K562 (cell line): ENCODE measurements at regions of chr17 and their contacts with region 1.

Region 1: DNA sequence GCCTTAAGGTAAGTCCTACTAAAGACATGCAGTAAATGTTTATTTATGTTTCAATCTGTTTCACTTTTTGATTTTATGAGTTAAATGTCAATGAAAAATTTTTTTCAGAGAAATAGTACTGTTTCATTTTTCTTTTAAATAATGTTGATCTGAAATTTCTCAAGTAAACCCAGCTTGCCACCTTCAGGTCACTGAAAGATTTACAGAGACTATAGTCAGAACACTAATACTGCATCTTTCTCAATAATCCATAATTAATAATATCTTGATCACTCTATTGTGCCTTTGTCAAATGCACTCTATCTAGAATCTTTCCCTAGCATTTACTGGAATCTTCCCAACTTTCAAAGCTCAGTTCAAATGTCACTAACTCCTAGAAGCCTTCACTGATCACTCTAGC is 6.4 kb upstream of the DHX40 start:
- DNase-seq: no peak
- ATAC-seq: no peak
- H3K4me3 ChIP-seq: no peak overlapping the region
- H3K27ac ChIP-seq: no peak overlapping the region
- H3K4me1 ChIP-seq: peaks cover 3 to 7% of the 10 kb centered on the region in 2 experiments; a peak in 3 of 5 replicates
- H3K27me3 ChIP-seq: peaks cover 5% of the 10 kb centered on the region in 2 experiments; a peak in 3 of 5 replicates
- CTCF ChIP-seq: peak in 2 of 3 experiments; percentile 34 to 53; a peak in 3 of 6 replicates
- EP300 ChIP-seq: no peak
- POLR2A ChIP-seq: no peak
- RAD21 ChIP-seq: peak; percentile 52 to 59

Region 2: GRCh38 chr17:59451706-59452105 is 107.3 kb before region 1 on chr17:
- CTCF ChIA-PET with region 1: no interaction called
- POLR2A ChIA-PET with region 1: no interaction called
- in situ Hi-C with region 1: no loop called
- intact Hi-C with region 1: loop called (anchors 10 kb)
- DNase-seq: no peak
- ATAC-seq: no peak
- H3K4me3 ChIP-seq: no peak overlapping the region
- H3K27ac ChIP-seq: no peak overlapping the region
- H3K4me1 ChIP-seq: peaks cover 0 to 3% of the 10 kb centered on the region in 2 experiments; a peak in 3 of 5 replicates
- H3K27me3 ChIP-seq: 0 out of 5 replicates have a peak, but pooled peaks cover 0 to 5% of the 10 kb centered on the region in 2 experiments
- CTCF ChIP-seq: no peak
- EP300 ChIP-seq: no peak
- POLR2A ChIP-seq: no peak
- RAD21 ChIP-seq: no peak

Region 3: DNA sequence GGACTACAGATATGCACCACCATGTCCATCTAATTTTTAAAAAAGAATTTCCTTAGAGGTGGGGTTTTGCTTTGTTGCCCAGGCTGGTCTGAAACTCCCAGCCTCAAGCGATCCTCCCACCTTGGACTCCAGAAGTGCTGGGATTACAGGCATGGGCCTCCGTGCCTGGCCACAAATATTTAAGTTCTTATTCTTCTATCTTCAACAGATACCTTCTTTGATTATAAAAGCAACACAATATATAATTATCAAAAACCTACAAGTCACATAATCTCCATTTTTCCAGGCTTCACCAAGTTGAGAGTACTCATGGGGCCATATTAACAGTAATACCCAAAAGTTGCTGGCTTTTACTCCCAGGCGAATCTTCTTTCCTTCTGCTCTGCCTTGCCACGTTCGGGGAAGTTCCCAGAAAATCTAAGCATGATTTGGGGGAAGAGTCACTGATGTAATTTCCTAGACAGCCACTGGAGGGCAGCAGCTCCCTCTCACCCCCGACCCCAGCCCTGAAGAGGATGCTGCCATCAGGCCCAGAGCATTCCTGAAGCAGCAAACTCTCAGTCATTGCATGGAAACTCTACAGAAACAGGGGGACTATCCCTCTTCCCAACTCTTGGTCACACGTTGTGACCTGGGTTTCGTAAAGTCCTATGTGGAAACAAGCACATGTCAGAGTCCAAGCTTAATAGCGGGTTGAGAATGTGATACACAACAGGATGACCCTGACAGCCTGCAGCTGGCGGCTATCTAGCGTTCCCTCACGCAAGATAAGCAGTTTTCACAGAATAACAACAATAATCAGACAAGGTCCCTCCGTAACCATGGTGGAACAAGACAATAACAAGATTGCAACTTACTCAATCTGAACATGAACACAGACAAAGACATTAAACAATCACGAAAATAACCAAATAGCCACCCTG is 37.5 kb before region 1 on chr17:
- CTCF ChIA-PET with region 1: interaction called, 6 read pairs
- POLR2A ChIA-PET with region 1: interaction called, 3 read pairs
- in situ Hi-C with region 1: no loop called
- intact Hi-C with region 1: loop called (anchors 1 kb)
- DNase-seq: peak; percentile 73 to 91 (median 88)
- ATAC-seq: peak; percentile 95
- H3K4me3 ChIP-seq: no peak overlapping the region
- H3K27ac ChIP-seq: no peak overlapping the region
- H3K4me1 ChIP-seq: peaks cover 0 to 7% of the 10 kb centered on the region in 2 experiments; a peak in 2 of 5 replicates
- H3K27me3 ChIP-seq: peaks cover 0 to 2% of the 10 kb centered on the region in 2 experiments; a peak in 1 of 5 replicates
- CTCF ChIP-seq: peak; percentile 81 to 95 (median 90)
- EP300 ChIP-seq: no peak
- POLR2A ChIP-seq: no peak
- RAD21 ChIP-seq: peak; percentile 85 to 92

Region 4: DNA sequence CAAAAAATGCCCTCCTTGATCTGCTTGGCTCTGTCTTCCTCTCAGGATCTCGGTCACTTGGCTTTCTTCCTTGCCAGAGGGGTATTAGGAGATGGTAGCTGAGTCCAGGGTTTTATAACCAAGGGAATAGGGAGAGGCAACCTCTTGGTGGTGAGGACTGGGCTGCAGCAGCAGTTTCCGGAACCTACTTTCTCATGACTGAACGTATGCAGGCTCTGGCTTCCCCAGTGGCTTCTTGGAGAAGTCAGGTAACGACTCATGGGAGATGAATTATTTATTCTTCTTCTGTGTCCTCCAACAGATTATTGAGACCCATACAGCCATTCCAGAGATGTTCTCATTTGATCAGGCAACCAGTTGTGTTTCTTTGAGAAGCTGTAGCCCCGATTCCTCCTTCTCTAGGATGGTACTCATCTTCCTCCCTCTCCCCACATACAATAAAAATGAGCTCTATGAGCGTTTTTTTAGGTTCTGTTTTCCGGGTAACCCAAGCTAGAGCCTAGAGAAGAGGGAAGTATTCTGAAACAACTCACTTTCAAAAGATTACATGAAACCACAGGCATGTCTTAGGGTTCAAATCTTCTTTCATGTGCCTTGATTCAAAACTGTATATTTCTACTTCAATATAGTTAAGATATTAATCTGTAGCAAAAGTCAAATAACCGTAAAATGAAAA is 15.9 kb before region 1 on chr17:
- CTCF ChIA-PET with region 1: no interaction called
- POLR2A ChIA-PET with region 1: no interaction called
- in situ Hi-C with region 1: no loop called
- intact Hi-C with region 1: no loop called
- DNase-seq: no peak
- ATAC-seq: peak; percentile 66
- H3K4me3 ChIP-seq: no peak overlapping the region
- H3K27ac ChIP-seq: no peak overlapping the region
- H3K4me1 ChIP-seq: peaks cover 4 to 8% of the 10 kb centered on the region in 2 experiments; a peak in 2 of 5 replicates
- H3K27me3 ChIP-seq: no peaks in the 10 kb centered on the region
- CTCF ChIP-seq: no peak
- EP300 ChIP-seq: no peak
- POLR2A ChIP-seq: no peak
- RAD21 ChIP-seq: no peak

Region 5: DNA sequence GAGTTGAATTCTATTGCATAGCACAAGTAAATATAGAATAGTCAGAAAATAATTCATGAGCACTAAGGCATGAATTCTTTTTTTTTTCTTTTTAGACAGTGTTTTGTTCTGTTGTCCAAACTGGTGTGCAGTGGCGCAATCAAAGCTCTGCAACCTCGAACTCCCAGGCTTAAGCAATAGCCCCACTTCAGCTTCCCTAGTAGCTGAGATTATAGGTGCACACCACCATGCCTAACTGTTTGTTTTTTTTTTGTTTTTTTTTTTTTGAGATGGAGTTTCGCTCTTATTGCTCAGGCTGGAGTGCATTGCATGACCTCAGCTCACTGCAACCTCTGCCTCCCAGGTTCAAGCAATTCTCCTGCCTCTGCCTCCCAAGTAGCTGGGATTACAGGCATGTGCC is 317.1 kb after region 1 on chr17:
- CTCF ChIA-PET with region 1: no interaction called
- POLR2A ChIA-PET with region 1: no interaction called
- in situ Hi-C with region 1: no loop called
- intact Hi-C with region 1: no loop called
- DNase-seq: no peak
- ATAC-seq: no peak
- H3K4me3 ChIP-seq: no peak overlapping the region
- H3K27ac ChIP-seq: no peak overlapping the region
- H3K4me1 ChIP-seq: no peaks in the 10 kb centered on the region
- H3K27me3 ChIP-seq: no peaks in the 10 kb centered on the region
- CTCF ChIP-seq: no peak
- EP300 ChIP-seq: no peak
- POLR2A ChIP-seq: no peak
- RAD21 ChIP-seq: no peak